ENCODE measurements at regions of chr2 and their contacts with region 1.

Region 1: GRCh38 chr2:8355102-8355859 is 326.6 kb upstream of the ID2 start:
- DNase-seq: no peak
- H3K4me3 ChIP-seq: no peak overlapping the region
- H3K27ac ChIP-seq: no peak overlapping the region
- H3K4me1 ChIP-seq: no peaks in the 10 kb centered on the region
- H3K27me3 ChIP-seq: no peaks in the 10 kb centered on the region
- CTCF ChIP-seq: no peak
- POLR2A ChIP-seq: no peak

Region 2: DNA sequence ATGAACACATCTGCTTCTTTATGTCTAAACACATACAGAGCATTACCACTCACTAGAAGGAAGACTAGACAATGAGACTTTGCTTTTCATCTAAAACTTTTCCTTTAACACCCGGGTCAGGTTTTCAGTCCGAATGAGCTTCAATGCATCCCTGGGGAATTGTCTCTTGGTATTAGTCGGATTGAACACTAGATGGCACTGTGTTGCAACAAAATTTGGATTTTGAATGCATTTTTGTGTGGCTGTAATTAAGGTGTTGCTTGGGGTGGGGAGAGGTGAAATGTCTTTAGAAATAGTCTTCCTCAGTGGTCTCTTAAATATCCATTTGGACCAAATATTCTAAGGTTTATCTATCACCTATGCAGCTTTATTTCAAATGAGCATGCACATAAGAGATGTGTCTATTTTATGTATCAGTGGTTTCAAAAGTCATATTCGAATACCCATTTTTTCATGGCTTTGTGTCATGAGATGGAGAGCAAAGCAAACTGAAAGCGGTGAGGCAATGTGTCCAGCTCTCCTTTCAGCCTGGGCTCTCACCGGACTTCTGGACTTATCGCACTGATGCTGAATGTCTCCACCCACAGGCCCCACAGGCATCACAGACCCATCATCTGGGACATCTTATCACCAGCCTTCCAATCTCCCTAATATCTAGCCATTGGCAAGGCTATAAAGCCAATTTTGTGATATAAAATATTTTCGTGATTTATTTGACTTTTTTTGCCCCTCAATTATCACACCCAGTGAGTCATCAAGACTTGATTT is 927.8 kb before region 1 on chr2:
- intact Hi-C with region 1: no loop called
- DNase-seq: no peak
- H3K4me3 ChIP-seq: no peak overlapping the region
- H3K27ac ChIP-seq: no peak overlapping the region
- H3K4me1 ChIP-seq: no peaks in the 10 kb centered on the region
- H3K27me3 ChIP-seq: no peaks in the 10 kb centered on the region
- CTCF ChIP-seq: peak; percentile 72 to 82 (median 76)
- POLR2A ChIP-seq: no peak

Region 3: DNA sequence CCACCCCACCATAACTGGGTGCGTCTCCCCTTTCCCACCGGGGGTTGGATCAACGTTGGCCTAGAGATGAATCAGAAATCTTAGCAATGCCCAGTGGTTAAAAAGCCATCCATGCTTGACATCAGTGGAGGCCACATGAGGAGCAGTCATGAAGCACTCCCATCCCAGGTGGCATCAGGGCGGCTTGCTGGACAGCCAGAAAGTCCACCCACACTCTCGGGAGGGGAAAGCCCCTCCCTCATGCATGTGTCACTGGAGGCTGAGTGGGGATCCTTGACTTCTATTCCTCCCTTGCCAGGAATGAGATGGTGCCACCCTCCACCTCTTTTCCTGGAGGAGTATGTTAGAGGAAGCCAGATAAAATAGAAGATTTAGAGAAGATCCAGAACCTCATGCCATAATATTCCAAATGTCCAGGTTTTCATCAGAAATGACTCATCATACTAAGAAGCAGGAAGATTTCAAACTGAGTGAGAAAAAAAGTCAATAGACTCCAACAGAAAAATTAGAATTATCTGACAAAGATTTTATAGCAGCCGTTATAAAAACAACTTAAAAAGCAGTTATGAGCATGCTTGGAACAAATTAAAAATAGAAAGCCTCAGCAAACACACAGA is 180.5 kb before region 1 on chr2:
- intact Hi-C with region 1: loop called (anchors 5 kb)
- DNase-seq: no peak
- H3K4me3 ChIP-seq: no peak overlapping the region
- H3K27ac ChIP-seq: no peak overlapping the region
- H3K4me1 ChIP-seq: no peaks in the 10 kb centered on the region
- H3K27me3 ChIP-seq: no peaks in the 10 kb centered on the region
- CTCF ChIP-seq: no peak
- POLR2A ChIP-seq: no peak

Region 4: DNA sequence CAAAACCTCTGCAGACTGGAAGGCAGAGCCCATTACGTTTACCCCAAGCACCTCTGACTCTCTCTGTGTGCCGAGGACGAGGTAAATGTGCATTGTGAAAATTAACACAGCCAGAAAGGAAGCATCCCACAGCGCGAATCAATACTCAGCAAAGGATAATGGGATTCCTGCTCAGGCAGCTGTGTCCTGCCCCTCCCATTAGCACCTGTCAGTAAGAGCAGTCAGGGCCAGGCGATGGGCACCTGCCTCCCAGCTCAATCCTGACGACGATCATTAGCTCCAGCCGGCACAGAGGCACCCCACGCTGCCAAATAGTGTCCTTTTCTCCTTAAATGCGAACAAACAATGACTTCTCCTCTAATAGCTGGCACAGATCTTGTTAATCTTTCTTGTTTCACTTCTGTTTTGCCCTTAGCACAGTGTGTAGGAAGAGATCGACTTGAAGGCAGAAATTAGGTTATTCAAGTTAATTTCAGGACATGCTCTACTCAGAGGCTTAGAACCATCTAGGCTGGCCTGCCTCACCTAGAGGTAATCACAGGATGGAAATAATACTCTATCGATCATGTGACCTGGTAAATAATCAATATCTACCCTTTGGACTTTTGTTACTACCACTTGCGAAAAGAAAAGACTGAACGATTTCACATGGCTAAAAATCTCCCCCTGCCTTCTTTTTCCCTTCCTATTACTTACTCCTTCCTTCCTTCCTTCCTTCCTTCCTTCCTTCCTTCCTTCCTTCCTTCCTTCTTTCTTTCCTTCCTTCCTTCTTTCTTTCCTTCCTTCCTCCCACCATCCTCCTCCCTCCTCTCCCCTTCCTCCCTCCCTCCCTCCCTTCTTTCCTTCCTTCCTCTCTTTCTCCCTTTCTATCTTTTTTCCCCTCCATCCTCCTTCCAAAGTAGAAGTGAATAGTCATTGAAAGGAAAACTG is 161.3 kb before region 1 on chr2:
- intact Hi-C with region 1: no loop called
- DNase-seq: no peak
- H3K4me3 ChIP-seq: peak overlapping the region in 2 of 3 donors; percentile 15 to 48
- H3K27ac ChIP-seq: no peak overlapping the region
- H3K4me1 ChIP-seq: no peaks in the 10 kb centered on the region
- H3K27me3 ChIP-seq: no peaks in the 10 kb centered on the region
- CTCF ChIP-seq: no peak
- POLR2A ChIP-seq: no peak

Region 5: GRCh38 chr2:8334866-8335325 is 20.4 kb before region 1 on chr2:
- intact Hi-C with region 1: no loop called
- DNase-seq: no peak
- H3K4me3 ChIP-seq: no peak overlapping the region
- H3K27ac ChIP-seq: no peak overlapping the region
- H3K4me1 ChIP-seq: no peaks in the 10 kb centered on the region
- H3K27me3 ChIP-seq: no peaks in the 10 kb centered on the region
- CTCF ChIP-seq: no peak
- POLR2A ChIP-seq: no peak

Region 6: GRCh38 chr2:9230881-9231670 is 875.8 kb after region 1 on chr2:
- intact Hi-C with region 1: no loop called
- DNase-seq: no peak
- H3K4me3 ChIP-seq: no peak overlapping the region
- H3K27ac ChIP-seq: peak overlapping the region in 1 of 2 donors; percentile 45
- H3K4me1 ChIP-seq: peaks cover 5 to 13% of the 10 kb centered on the region in 2 donors
- H3K27me3 ChIP-seq: no peaks in the 10 kb centered on the region
- CTCF ChIP-seq: no peak
- POLR2A ChIP-seq: no peak

Measured in breast epithelium (tissue), 4 donors.